Mucosa of descending colon (tissue), 3 donors: ENCODE measurements at regions of chr6 and their contacts with region 1.

Region 1: DNA sequence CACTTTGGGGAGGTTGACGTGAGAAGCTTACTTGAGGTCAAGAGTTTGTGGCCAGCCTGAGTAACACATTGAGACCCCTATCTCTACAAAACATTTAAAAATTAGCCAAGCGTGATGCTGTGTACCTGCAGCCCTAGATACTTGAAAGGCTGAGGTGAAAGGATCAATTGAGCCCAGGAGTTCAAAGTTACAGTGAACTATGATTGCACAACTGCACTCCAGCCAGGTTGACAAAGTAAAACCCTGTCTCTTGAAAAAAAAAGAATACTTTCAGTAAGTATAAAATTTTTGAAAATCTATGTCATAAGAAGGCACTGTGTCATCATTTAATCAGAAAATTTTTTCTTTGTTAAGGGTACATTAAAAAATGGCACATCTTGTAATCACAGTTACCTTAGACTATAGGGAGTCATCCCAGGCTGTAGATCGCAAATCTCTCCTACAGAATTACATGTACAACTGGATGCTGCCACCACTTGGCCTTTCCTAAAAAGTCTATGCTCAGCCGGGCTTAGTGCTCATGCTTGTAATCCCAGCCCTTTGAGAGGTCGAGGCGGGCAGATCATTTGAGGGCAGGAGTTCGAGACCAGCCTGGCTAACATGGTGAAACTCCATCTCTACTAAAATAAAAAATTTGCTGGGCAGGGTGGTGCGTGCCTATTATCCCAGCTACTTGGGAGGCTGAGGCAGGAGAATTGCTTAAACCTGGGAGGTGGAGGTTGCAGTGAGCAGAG is 17.0 kb upstream of the MRS2 start:
- DNase-seq: no peak
- ATAC-seq: no peak
- H3K4me3 ChIP-seq: no peak overlapping the region
- H3K4me1 ChIP-seq: no peaks in the 10 kb centered on the region
- CTCF ChIP-seq: no peak

Region 2: GRCh38 chr6:24283043-24283985 is 102.4 kb before region 1 on chr6:
- intact Hi-C with region 1: loop called in 1 of 2 experiments (anchors 5 kb)
- DNase-seq: peak in 2 of 3 donors; percentile 63 to 84
- ATAC-seq: peak; percentile 94
- H3K4me3 ChIP-seq: no peak overlapping the region
- H3K4me1 ChIP-seq: peaks cover 11% of the 10 kb centered on the region
- CTCF ChIP-seq: peak; percentile 6

Region 3: GRCh38 chr6:24720604-24721460 is 335.1 kb after region 1 on chr6:
- intact Hi-C with region 1: no loop called
- DNase-seq: peak; percentile 100
- ATAC-seq: peak; percentile 94
- H3K4me3 ChIP-seq: peak overlapping the region; percentile 95
- H3K4me1 ChIP-seq: peaks cover 18% of the 10 kb centered on the region
- CTCF ChIP-seq: no peak